Common myeloid progenitor, CD34-positive (primary cell): ENCODE measurements at regions of chr10 and their contacts with region 1.

Region 1: DNA sequence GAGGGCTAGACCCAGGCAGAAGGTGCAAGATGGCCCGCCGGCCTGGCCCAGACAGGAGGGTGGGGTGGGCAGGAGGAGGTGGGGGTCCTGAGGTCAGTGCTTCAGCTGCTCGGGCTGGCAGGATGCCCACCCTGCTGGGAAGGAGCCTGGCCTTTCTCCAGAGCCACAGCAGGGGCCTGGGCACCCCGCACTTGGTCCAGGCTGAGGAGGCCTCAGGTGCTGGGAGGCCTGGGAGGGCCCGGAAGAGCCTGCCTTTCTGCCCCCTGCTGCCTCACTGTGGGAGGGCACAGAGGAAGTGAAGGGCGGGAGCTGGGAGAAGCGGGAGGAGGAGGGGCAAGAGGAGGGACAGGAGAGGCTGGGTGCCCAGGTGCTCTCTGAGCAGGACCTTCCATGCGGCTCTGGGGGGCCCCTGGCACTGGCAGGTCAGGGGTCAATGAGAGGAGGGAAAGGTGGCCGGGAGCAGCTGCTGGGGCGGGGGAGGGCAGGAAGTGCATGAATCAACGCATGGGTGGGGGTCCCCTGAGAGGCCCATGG is 49.7 kb downstream of the PWWP2B start:
- DNase-seq: peak; percentile 58 to 66 (median 63)
- H3K4me3 ChIP-seq: peak overlapping the region in 4 of 7 experiments; percentile 43 to 62 (median 58)
- H3K27ac ChIP-seq: peak overlapping the region in 1 of 2 experiments; percentile 76
- H3K4me1 ChIP-seq: peaks cover 6 to 76% (median 66%) of the 10 kb centered on the region in 4 experiments
- H3K27me3 ChIP-seq: no peaks in the 10 kb centered on the region

Region 2: GRCh38 chr10:132387764-132388210 is 58.9 kb before region 1 on chr10:
- CTCF ChIA-PET with region 1: interaction called, 14 read pairs
- POLR2A ChIA-PET with region 1: no interaction called
- DNase-seq: peak; percentile 75 to 87 (median 85)
- H3K4me3 ChIP-seq: peak overlapping the region in 5 of 7 experiments; percentile 16 to 62 (median 33)
- H3K27ac ChIP-seq: peak overlapping the region; percentile 8 to 74
- H3K4me1 ChIP-seq: peaks cover 2 to 68% (median 64%) of the 10 kb centered on the region in 4 experiments
- H3K27me3 ChIP-seq: no peaks in the 10 kb centered on the region

Region 3: DNA sequence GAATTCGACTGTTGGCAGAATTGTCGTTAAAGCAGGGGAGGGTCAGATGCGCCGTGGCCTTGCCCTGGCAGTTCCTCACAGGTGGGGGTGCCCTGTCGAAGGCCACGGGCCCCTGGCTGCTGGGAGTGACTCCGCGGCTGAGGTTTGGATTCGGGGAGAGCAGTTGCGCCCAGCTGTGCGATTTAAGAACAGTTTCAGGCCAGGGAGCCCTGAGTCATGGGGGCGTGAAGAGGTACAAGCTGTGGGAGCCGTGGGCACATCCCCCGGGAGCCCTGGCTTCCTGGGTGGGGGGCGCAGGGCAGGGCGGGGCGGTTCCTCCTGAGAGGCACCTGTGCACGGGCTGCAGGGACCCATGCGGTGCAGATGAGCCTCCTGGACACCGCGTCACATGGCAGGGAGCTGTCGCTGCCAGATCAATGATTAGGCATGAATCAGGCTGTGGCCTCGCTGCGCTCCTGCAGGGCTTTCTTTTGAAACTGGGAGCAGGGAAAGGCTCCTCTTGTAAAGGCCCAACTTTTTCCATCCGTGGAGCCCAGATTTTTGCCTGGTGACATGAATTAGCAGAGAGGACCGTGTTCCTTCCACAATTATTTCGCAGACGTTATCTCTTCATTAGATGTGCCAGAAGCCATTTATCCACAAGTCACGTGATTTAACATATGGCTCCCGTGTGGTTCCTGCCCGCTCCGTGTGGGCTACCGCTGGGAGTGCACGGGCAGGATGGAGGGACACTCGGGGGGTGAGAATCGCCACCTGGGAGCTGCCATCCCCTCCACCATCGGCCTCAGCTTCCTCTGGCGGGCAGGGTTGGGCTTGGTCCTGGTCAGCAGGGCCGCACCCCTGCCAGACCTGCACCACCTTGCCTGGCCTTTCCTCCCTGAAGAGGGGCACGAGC is 48.8 kb before region 1 on chr10:
- CTCF ChIA-PET with region 1: interaction called, 25 read pairs
- POLR2A ChIA-PET with region 1: no interaction called
- DNase-seq: peak in 2 of 3 donors; percentile 73 to 80
- H3K4me3 ChIP-seq: peak overlapping the region; percentile 36 to 85 (median 70)
- H3K27ac ChIP-seq: peak overlapping the region in 1 of 2 experiments; percentile 54
- H3K4me1 ChIP-seq: peaks cover 2 to 80% (median 72%) of the 10 kb centered on the region in 4 experiments
- H3K27me3 ChIP-seq: no peaks in the 10 kb centered on the region

Region 4: GRCh38 chr10:132407814-132408278 is 38.9 kb before region 1 on chr10:
- CTCF ChIA-PET with region 1: interaction called, 34 read pairs
- POLR2A ChIA-PET with region 1: no interaction called
- DNase-seq: peak in 2 of 3 donors; percentile 58 to 72
- H3K4me3 ChIP-seq: peak overlapping the region in 5 of 7 experiments; percentile 26 to 63 (median 46)
- H3K27ac ChIP-seq: peak overlapping the region in 1 of 2 experiments; percentile 34
- H3K4me1 ChIP-seq: peaks cover 3 to 60% (median 55%) of the 10 kb centered on the region in 4 experiments
- H3K27me3 ChIP-seq: no peaks in the 10 kb centered on the region

Region 5: DNA sequence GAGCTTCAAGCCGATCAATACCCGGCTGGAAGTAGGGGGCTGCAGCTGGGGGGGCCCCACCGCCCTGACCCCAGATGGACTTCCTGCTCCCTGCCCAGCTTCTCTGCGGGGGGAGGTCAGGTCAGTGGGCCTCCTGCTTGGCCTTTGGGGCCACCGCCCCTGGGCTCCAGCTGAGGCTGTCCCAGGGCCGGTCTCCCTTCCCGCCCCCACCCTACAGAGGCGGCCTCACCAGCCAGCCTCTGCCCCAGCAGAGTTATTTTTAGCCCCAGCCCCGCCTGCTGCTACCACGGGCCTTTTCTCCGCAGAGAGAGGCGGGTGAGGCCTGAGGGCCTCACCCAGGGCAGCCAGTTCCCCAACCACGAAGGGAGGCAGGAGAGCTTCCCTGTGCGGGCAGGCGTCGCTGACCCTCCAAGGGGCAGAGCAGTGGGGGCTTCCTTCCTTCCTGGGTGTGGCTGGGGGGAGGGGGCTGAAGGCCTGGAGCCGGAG is 25.3 kb before region 1 on chr10:
- CTCF ChIA-PET with region 1: interaction called, 33 read pairs
- POLR2A ChIA-PET with region 1: interaction called, 8 read pairs
- DNase-seq: peak; percentile 41 to 83 (median 74)
- H3K4me3 ChIP-seq: peak overlapping the region in 4 of 7 experiments; percentile 39 to 60 (median 47)
- H3K27ac ChIP-seq: peak overlapping the region; percentile 33 to 79
- H3K4me1 ChIP-seq: peaks cover 4 to 76% (median 68%) of the 10 kb centered on the region in 4 experiments
- H3K27me3 ChIP-seq: no peaks in the 10 kb centered on the region

Region 6: DNA sequence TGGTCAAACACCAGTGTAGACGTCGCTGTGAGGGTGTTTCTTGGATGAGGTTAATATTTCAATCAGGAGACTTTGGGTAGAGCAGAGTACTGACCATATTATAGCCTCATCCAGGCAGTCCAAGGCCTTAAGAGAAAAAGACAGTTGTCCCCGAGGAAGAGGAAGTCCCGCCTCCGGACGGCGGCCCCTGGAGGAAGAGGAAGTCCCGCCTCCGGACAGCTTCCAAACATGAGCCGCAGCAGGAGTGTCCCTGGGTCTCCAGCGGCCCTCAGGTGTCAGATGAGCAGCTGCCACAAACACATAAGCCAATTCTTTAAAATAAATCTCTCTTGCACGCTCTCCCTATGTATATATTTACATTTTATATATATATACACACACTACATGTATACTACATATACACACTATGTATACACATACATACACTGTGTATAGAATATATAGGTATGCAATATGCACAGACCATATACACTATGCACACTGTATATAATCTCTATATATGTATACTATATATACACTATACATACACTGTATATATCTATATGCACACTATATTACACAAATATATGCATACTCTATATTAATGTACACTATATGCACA is 12.2 kb before region 1 on chr10:
- CTCF ChIA-PET with region 1: interaction called, 26 read pairs
- POLR2A ChIA-PET with region 1: no interaction called
- DNase-seq: peak; percentile 66 to 85 (median 80)
- H3K4me3 ChIP-seq: peak overlapping the region in 3 of 7 experiments; percentile 10 to 48 (median 39)
- H3K27ac ChIP-seq: peak overlapping the region in 1 of 2 experiments; percentile 16
- H3K4me1 ChIP-seq: peaks cover 2 to 43% (median 24%) of the 10 kb centered on the region in 4 experiments
- H3K27me3 ChIP-seq: no peaks in the 10 kb centered on the region